ENCODE measurements at regions of chr12 and their contacts with region 1.

Region 1: DNA sequence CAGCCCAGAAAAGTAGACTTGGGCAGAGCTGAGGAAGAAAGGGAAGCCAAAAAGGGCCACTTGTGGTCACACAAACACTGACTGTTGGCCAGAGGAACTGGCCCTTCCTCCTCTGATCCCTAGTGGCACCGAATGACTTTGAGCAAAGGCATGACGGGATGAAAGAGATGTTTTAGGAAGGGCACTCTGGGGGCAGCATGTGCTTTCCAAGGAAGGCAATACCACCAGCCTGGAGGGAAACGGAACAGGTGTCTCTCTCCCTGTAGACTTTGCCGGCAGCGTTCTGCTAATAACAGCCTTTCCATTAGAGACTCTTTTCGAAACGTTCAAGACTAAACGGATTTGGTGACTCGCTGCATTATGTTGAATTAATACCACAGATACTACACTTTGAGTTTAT is 12.3 kb upstream of the FBXO21 start:
- DNase-seq: no peak

Region 2: GRCh38 chr12:116773276-116773731 is 429.3 kb before region 1 on chr12:
- in situ Hi-C with region 1: no loop called
- DNase-seq: peak; percentile 10

Region 3: GRCh38 chr12:117333331-117333881 is 130.8 kb after region 1 on chr12:
- in situ Hi-C with region 1: no loop called
- DNase-seq: no peak

Region 4: DNA sequence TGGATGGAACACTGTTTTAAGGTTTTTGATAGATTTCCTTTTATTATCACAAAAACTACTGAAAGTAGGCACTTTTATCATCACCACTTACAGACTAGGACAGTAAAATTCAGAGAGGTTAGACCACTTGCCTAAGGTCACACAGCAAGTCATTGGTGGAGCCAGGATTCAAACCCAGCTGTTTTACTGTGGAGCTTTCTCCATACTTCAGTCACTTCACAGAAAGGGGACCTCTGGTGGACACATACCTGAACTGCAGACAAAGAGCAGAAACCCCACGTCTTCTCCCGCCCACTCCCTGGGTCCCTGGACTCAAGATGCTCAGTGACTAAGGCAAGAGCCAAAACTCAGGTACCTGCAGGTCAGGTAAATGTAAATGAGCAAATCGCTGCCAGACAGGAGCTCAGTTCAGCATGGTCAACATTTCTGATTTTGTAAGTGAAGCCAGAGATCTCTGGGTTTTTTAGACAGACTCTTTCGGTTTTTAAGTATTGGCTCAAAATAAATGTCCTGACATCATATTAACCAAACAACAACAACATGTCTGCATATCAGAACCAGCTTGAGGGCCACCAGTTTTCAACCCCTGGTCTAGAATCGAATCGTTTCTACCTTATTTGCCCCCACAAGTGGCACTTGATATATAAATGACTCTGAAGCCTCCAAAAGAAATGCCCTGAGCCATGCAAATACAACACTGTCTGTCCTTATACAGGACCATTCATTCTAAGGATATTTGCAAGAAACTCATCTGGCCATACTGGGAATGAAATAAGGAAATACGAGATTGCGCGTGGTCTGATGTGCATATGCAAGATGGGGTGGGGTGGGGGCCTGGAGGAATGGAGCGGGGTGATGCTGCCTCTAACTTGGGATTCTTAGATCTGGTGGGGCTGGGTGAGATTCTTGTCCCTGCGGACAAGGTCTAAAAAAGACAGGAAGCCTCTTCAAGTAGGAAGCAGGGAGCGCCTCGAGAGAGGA is 655.4 kb after region 1 on chr12:
- in situ Hi-C with region 1: loop called (anchors 10 kb)
- DNase-seq: peak; percentile 19

Measured in Caki2 (cell line).